ENCODE measurements at regions of chr10 and their contacts with region 1.

Region 1: GRCh38 chr10:79322616-79323543 is 24.4 kb upstream of the PPIF start:
- DNase-seq: peak; percentile 64 to 92 (median 81)
- ATAC-seq: peak; percentile 93
- H3K4me3 ChIP-seq: peak overlapping the region; percentile 17
- H3K4me3 Mint-ChIP-seq: peak overlapping the region; percentile 82
- H3K27ac ChIP-seq: peak overlapping the region; percentile 42 to 67
- H3K27ac Mint-ChIP-seq: peak overlapping the region; percentile 93
- H3K4me1 ChIP-seq: peaks cover 79% of the 10 kb centered on the region
- H3K4me1 Mint-ChIP-seq: peaks cover 73% of the 10 kb centered on the region
- H3K27me3 ChIP-seq: no peaks in the 10 kb centered on the region
- H3K27me3 Mint-ChIP-seq: peaks cover under 1% of the 10 kb centered on the region
- CTCF ChIP-seq: no peak

Region 2: GRCh38 chr10:79178614-79179163 is 144.2 kb before region 1 on chr10:
- CTCF ChIA-PET with region 1: no interaction called
- POLR2A ChIA-PET with region 1: no interaction called
- intact Hi-C with region 1: no loop called
- DNase-seq: no peak
- ATAC-seq: no peak
- H3K4me3 ChIP-seq: no peak overlapping the region
- H3K4me3 Mint-ChIP-seq: no peak overlapping the region
- H3K27ac ChIP-seq: no peak overlapping the region
- H3K27ac Mint-ChIP-seq: no peak overlapping the region
- H3K4me1 ChIP-seq: no peaks in the 10 kb centered on the region
- H3K4me1 Mint-ChIP-seq: no peaks in the 10 kb centered on the region
- H3K27me3 ChIP-seq: no peaks in the 10 kb centered on the region
- H3K27me3 Mint-ChIP-seq: no peaks in the 10 kb centered on the region
- CTCF ChIP-seq: no peak

Region 3: DNA sequence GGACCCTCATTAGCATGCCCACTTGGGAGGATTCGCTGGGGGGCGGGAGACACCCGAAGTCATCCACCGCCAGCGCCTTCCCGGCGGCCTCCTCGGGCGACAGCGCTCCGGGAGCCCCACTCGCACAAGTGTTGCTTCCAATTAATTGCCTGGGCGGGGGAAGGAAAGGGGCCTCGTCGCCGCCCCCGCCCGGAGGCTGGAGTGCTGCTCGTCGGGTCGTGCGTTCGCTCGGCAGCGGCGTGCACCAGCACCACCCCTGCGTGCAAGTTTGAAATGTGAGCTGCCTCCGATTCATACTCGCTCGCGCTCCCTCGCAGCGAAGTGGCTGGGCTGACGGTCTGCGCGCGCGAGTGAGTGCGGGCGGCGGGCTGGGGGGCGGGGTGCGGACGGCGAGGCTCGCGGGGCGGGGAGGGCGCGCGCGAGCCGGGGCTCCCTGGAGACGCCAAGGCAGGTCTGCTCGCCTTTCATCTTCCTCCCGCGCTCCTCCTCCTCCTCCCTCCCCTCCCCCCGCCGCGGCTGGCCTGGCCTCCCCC is 80.2 kb before region 1 on chr10:
- CTCF ChIA-PET with region 1: no interaction called
- POLR2A ChIA-PET with region 1: interaction called, 7 read pairs
- intact Hi-C with region 1: loop called in 1 of 2 experiments (anchors 10 kb)
- DNase-seq: peak in 11 of 14 experiments; percentile 11 to 79 (median 37)
- ATAC-seq: peak; percentile 57
- H3K4me3 ChIP-seq: peak overlapping the region; percentile 63
- H3K4me3 Mint-ChIP-seq: peak overlapping the region; percentile 54
- H3K27ac ChIP-seq: no peak overlapping the region
- H3K27ac Mint-ChIP-seq: no peak overlapping the region
- H3K4me1 ChIP-seq: peaks cover 56% of the 10 kb centered on the region
- H3K4me1 Mint-ChIP-seq: peaks cover 44% of the 10 kb centered on the region
- H3K27me3 ChIP-seq: no peaks in the 10 kb centered on the region
- H3K27me3 Mint-ChIP-seq: no peaks in the 10 kb centered on the region
- CTCF ChIP-seq: no peak

Region 4: GRCh38 chr10:79286318-79286951 is 36.4 kb before region 1 on chr10:
- CTCF ChIA-PET with region 1: no interaction called
- POLR2A ChIA-PET with region 1: interaction called, 13 read pairs
- intact Hi-C with region 1: no loop called
- DNase-seq: peak; percentile 32 to 93 (median 82)
- ATAC-seq: peak; percentile 96
- H3K4me3 ChIP-seq: peak overlapping the region; percentile 24
- H3K4me3 Mint-ChIP-seq: peak overlapping the region; percentile 54
- H3K27ac ChIP-seq: peak overlapping the region; percentile 26 to 55
- H3K27ac Mint-ChIP-seq: peak overlapping the region; percentile 71
- H3K4me1 ChIP-seq: peaks cover 53% of the 10 kb centered on the region
- H3K4me1 Mint-ChIP-seq: peaks cover 47% of the 10 kb centered on the region
- H3K27me3 ChIP-seq: no peaks in the 10 kb centered on the region
- H3K27me3 Mint-ChIP-seq: no peaks in the 10 kb centered on the region
- CTCF ChIP-seq: no peak